Activated CD8-positive, alpha-beta T cell treated with anti-CD3 and anti-CD28 coated beads for 36 hours (primary cell): ENCODE measurements at regions of chr10 and their contacts with region 1.

Region 1: GRCh38 chr10:124741281-124741921 is 2.8 kb downstream of the FAM53B start:
- DNase-seq: peak; percentile 92
- ATAC-seq: peak; percentile 63
- H3K4me3 Mint-ChIP-seq: peak overlapping the region; percentile 87
- H3K27ac Mint-ChIP-seq: peak overlapping the region; percentile 79
- H3K4me1 Mint-ChIP-seq: peaks cover 69% of the 10 kb centered on the region
- H3K27me3 Mint-ChIP-seq: peaks cover 1% of the 10 kb centered on the region
- CTCF ChIP-seq: peak; percentile 94

Region 2: DNA sequence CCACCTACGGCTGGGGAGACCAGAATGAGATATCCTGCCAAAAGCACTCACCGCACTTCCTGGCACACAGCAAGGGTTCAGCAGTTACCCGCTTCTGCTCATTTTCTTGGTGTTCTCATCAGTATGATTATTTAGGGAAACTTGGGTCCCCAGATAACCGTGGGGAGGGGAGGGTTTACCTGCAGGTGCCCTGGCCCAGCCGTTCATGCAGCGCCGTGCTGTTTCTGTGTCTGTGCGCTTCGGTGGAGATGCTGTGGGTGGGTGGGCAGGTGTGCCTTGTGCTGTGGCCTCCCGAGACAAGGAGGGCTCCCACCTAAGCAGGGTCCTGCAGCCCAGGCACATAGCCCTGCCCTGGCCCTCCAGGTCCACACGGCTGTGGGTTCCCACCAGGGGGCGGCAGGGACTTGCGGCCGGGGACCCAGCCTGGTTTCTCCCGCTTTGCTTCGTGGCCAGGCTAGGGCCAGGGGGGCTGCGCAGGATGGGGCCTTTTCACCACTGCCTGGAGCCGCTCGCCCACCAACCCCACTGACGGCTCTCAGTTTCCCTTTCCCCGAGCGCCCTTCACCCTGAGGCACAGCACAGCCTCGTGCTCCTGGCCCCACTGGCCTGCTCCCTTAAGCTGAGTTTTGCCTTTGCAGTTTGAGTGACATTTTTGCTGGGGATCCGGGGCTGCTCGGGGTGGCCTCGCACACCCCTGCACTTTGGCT is 201.3 kb before region 1 on chr10:
- CTCF ChIA-PET with region 1: interaction called, 31 read pairs
- POLR2A ChIA-PET with region 1: interaction called, 3 read pairs
- intact Hi-C with region 1: no loop called
- DNase-seq: peak; percentile 75
- ATAC-seq: peak; percentile 89
- H3K4me3 Mint-ChIP-seq: no peak overlapping the region
- H3K27ac Mint-ChIP-seq: no peak overlapping the region
- H3K4me1 Mint-ChIP-seq: peaks cover 12% of the 10 kb centered on the region
- H3K27me3 Mint-ChIP-seq: no peaks in the 10 kb centered on the region
- CTCF ChIP-seq: peak; percentile 64

Region 3: DNA sequence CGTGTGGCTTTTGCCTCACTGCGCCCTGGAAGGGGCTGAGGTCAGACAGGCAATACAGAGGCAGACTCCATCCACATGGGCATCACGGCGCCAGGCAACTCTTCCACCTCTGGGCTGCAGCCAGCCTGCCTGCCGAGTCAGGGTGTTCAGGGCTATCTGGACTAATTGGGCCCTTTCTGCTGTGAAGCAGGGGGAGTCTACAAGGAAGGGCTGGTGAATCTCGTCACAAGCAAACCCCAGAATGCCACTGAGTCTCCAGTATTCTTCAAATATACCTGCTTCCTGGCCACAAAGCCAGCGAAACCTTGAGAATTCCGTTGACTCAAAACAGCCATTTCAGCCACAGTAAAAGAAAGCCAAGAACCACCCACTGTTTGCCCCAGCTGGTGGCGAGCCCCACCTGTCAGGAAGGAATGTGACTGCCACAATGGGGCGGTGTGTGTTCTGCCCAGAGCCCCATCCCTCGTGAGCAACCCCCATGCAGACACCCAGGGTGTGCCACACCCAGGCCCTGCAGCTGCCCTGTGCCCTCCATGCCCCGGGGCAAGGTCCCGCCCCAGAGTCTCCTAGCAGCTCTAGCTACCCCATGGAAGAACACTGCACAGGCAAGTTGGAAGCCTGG is 114.5 kb before region 1 on chr10:
- CTCF ChIA-PET with region 1: interaction called, 27 read pairs
- POLR2A ChIA-PET with region 1: interaction called, 10 read pairs
- intact Hi-C with region 1: no loop called
- DNase-seq: peak; percentile 76
- ATAC-seq: peak; percentile 76
- H3K4me3 Mint-ChIP-seq: no peak overlapping the region
- H3K27ac Mint-ChIP-seq: no peak overlapping the region
- H3K4me1 Mint-ChIP-seq: peaks cover 33% of the 10 kb centered on the region
- H3K27me3 Mint-ChIP-seq: no peaks in the 10 kb centered on the region
- CTCF ChIP-seq: no peak

Region 4: DNA sequence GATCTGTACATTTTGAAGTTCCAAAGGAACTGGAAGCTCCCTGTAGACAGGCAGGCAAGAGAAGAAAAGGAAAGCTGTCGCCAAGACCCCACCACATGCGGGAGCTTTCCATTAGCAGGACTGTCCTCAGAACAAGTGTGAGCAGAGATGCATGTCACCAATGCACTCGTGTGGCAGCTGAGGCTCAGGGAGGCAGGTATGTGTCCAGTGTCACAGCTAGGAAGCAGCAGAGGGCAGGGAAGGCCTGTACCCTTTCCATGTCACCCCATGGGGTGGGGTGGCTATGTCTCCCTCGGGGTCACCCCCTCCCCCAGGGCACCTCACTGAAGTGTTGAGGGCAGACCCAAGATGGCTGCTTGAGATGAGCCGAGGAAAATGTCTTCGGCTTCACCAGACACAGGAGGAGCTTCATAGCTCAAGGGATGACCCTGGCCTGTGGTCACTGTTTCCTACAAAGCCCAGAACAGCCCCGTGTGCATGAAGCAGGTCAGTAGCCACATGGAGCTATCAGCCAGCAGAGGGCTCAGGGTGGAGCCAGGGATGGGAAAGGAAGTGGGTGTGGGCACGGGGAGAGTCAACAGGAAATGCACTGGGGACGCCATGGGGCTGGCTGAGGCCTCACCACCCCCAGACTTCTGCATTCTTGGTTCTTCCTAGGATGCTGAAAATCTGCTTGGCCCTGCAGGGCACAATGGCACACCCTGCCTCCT is 93.8 kb before region 1 on chr10:
- CTCF ChIA-PET with region 1: interaction called, 52 read pairs
- POLR2A ChIA-PET with region 1: interaction called, 9 read pairs
- intact Hi-C with region 1: loop called (anchors 5 kb)
- DNase-seq: peak; percentile 83
- ATAC-seq: peak; percentile 70
- H3K4me3 Mint-ChIP-seq: peak overlapping the region; percentile 33
- H3K27ac Mint-ChIP-seq: peak overlapping the region; percentile 88
- H3K4me1 Mint-ChIP-seq: peaks cover 81% of the 10 kb centered on the region
- H3K27me3 Mint-ChIP-seq: no peaks in the 10 kb centered on the region
- CTCF ChIP-seq: peak; percentile 31

Region 5: GRCh38 chr10:124697830-124698544 is 43.4 kb before region 1 on chr10:
- CTCF ChIA-PET with region 1: interaction called, 18 read pairs
- POLR2A ChIA-PET with region 1: interaction called, 7 read pairs
- intact Hi-C with region 1: no loop called
- DNase-seq: peak; percentile 76
- ATAC-seq: peak; percentile 50
- H3K4me3 Mint-ChIP-seq: no peak overlapping the region
- H3K27ac Mint-ChIP-seq: peak overlapping the region; percentile 98
- H3K4me1 Mint-ChIP-seq: peaks cover 93% of the 10 kb centered on the region
- H3K27me3 Mint-ChIP-seq: no peaks in the 10 kb centered on the region
- CTCF ChIP-seq: no peak

Region 6: DNA sequence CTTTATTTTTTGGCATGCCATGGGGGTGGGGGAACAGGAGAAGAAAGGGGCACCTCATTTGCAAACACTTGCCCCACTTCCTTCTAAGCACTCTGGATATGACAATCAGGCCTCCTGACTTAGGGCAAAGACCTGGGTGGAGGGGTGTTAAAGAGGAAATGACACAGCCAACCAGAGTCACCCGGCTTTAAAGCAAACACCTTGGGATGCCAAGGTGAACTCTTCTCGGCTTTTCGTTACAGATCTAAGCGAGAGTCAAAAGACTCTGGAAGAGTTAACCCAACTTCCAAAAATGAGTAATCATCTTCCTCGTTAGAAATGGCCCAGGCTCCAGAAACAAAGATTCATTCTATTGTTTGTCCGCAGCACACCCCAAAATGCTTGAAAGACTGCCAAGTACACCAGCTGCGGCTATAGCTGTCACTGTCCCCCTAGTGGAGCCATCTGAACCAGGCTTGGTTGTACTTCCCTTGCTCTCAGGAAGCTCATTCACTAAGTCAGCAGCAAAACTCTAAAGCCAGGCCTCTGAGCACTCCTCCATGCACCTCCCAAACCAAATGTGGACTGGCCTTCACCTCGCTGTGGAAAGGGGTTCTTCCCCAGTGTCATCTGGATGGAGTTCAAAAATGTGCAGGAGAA is 22.1 kb before region 1 on chr10:
- CTCF ChIA-PET with region 1: interaction called, 91 read pairs
- POLR2A ChIA-PET with region 1: interaction called, 39 read pairs
- intact Hi-C with region 1: no loop called
- DNase-seq: peak; percentile 85
- ATAC-seq: peak; percentile 45
- H3K4me3 Mint-ChIP-seq: peak overlapping the region; percentile 52
- H3K27ac Mint-ChIP-seq: peak overlapping the region; percentile 91
- H3K4me1 Mint-ChIP-seq: peaks cover 88% of the 10 kb centered on the region
- H3K27me3 Mint-ChIP-seq: no peaks in the 10 kb centered on the region
- CTCF ChIP-seq: peak; percentile 60

Region 7: GRCh38 chr10:125027871-125028869 is 286.8 kb after region 1 on chr10:
- CTCF ChIA-PET with region 1: no interaction called
- POLR2A ChIA-PET with region 1: no interaction called
- intact Hi-C with region 1: no loop called
- DNase-seq: no peak
- ATAC-seq: no peak
- H3K4me3 Mint-ChIP-seq: no peak overlapping the region
- H3K27ac Mint-ChIP-seq: no peak overlapping the region
- H3K4me1 Mint-ChIP-seq: no peaks in the 10 kb centered on the region
- H3K27me3 Mint-ChIP-seq: no peaks in the 10 kb centered on the region
- CTCF ChIP-seq: no peak